ENCODE measurements at regions of chrX and their contacts with region 1.

Region 1: GRCh38 chrX:101415180-101416145 is 7.4 kb downstream of the HNRNPH2 start:
- DNase-seq: peak; percentile 68
- ATAC-seq: peak; percentile 76
- H3K4me3 ChIP-seq: 0 out of 2 replicates have a peak overlapping the region, but pooled peaks have one; percentile 2
- H3K27ac ChIP-seq: peak overlapping the region; percentile 10
- H3K4me1 ChIP-seq: peaks cover 22% of the 10 kb centered on the region
- H3K27me3 ChIP-seq: no peaks in the 10 kb centered on the region
- CTCF ChIP-seq: peak; percentile 69 to 82 (median 73)
- EP300 ChIP-seq: no peak
- POLR2A ChIP-seq: no peak
- RAD21 ChIP-seq: peak; percentile 84

Region 2: DNA sequence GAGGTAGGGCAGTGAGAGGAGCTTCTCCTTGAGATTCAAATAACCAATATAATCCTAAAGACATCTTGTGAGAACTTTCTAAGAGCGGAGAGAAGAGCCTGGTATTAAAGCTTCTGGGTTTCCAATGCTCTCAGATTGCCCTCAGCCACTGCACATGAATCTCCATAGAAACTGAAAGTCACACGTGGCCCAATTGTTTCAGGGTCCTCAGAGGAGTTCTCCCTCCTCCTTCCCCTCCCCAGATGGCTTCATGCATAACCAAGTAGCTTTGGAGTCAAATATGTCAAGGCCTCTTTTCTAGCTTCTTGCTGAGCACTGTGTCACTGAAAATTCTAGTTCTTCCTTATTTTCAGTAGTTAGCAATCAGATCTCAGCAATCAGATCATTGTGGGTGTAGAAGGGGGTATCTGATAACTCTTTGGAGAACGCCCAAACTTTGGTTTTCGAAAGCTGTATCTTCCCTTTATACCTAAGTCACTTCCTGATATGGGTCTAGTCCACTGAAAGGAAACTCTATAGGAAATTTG is 31.7 kb before region 1 on chrX:
- CTCF ChIA-PET with region 1: interaction called, 4 read pairs
- POLR2A ChIA-PET with region 1: interaction called, 4 read pairs
- RAD21 ChIA-PET with region 1: interaction called, 11 read pairs
- SMC1A ChIA-PET with region 1: interaction called, 3 read pairs
- in situ Hi-C with region 1: no loop called
- intact Hi-C with region 1: no loop called
- DNase-seq: peak; percentile 60
- ATAC-seq: peak; percentile 75
- H3K4me3 ChIP-seq: peak overlapping the region; percentile 71
- H3K27ac ChIP-seq: peak overlapping the region; percentile 70
- H3K4me1 ChIP-seq: no peaks in the 10 kb centered on the region
- H3K27me3 ChIP-seq: no peaks in the 10 kb centered on the region
- CTCF ChIP-seq: no peak
- EP300 ChIP-seq: no peak
- POLR2A ChIP-seq: no peak
- RAD21 ChIP-seq: no peak

Region 3: GRCh38 chrX:101462892-101463291 is 47.4 kb after region 1 on chrX:
- CTCF ChIA-PET with region 1: interaction called, 13 read pairs
- POLR2A ChIA-PET with region 1: no interaction called
- RAD21 ChIA-PET with region 1: no interaction called
- SMC1A ChIA-PET with region 1: interaction called, 5 read pairs
- in situ Hi-C with region 1: no loop called
- intact Hi-C with region 1: no loop called
- DNase-seq: no peak
- ATAC-seq: peak; percentile 71
- H3K4me3 ChIP-seq: no peak overlapping the region
- H3K27ac ChIP-seq: no peak overlapping the region
- H3K4me1 ChIP-seq: no peaks in the 10 kb centered on the region
- H3K27me3 ChIP-seq: no peaks in the 10 kb centered on the region
- CTCF ChIP-seq: peak; percentile 30 to 45 (median 38); a peak in 4 of 6 replicates
- EP300 ChIP-seq: no peak
- POLR2A ChIP-seq: no peak
- RAD21 ChIP-seq: peak; percentile 32

Region 4: DNA sequence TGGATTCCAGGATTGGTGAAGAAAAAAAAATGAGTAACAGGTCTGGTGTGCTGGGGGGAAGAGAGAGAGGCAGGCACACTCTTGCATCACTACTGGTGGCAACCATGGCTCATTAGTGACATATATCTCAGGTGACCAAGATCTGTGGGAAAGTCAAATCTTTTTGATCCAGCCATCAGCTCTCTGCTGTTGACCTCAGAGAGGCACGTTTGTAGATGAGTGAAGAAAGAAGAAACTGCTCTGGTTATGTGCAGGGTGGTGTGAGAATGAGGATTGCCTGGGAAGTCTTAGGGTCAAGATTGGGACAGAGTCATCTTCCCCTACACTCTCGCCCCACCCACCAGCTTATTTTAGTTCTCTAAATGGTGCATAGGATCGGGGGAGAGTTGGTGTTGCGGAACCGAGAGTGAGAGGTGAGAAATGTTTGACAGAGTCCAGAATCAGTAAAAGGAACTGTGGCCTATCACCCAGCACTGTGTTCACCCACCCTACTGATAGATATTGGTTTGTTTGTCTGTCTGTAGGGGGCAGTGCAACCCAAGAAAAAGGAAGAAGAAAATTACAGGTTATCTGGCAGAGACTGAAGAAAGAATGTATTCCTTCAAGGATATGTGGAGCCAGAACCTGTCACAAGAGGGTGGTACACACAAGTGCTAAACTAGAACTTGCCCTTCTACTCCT is 180.4 kb after region 1 on chrX:
- CTCF ChIA-PET with region 1: interaction called, 39 read pairs
- POLR2A ChIA-PET with region 1: interaction called, 6 read pairs
- RAD21 ChIA-PET with region 1: interaction called, 18 read pairs
- SMC1A ChIA-PET with region 1: interaction called, 4 read pairs
- in situ Hi-C with region 1: loop called (anchors 5 kb)
- intact Hi-C with region 1: loop called (anchors 5 kb)
- DNase-seq: peak; percentile 62
- ATAC-seq: peak; percentile 99
- H3K4me3 ChIP-seq: no peak overlapping the region
- H3K27ac ChIP-seq: no peak overlapping the region
- H3K4me1 ChIP-seq: no peaks in the 10 kb centered on the region; the same call in 1 of the 2 replicates
- H3K27me3 ChIP-seq: no peaks in the 10 kb centered on the region
- CTCF ChIP-seq: peak; percentile 48 to 77 (median 56); a peak in 5 of 6 replicates
- EP300 ChIP-seq: peak in 1 of 2 experiments; percentile 40; a peak in 1 of 4 replicates
- POLR2A ChIP-seq: no peak
- RAD21 ChIP-seq: peak; percentile 86

Region 5: DNA sequence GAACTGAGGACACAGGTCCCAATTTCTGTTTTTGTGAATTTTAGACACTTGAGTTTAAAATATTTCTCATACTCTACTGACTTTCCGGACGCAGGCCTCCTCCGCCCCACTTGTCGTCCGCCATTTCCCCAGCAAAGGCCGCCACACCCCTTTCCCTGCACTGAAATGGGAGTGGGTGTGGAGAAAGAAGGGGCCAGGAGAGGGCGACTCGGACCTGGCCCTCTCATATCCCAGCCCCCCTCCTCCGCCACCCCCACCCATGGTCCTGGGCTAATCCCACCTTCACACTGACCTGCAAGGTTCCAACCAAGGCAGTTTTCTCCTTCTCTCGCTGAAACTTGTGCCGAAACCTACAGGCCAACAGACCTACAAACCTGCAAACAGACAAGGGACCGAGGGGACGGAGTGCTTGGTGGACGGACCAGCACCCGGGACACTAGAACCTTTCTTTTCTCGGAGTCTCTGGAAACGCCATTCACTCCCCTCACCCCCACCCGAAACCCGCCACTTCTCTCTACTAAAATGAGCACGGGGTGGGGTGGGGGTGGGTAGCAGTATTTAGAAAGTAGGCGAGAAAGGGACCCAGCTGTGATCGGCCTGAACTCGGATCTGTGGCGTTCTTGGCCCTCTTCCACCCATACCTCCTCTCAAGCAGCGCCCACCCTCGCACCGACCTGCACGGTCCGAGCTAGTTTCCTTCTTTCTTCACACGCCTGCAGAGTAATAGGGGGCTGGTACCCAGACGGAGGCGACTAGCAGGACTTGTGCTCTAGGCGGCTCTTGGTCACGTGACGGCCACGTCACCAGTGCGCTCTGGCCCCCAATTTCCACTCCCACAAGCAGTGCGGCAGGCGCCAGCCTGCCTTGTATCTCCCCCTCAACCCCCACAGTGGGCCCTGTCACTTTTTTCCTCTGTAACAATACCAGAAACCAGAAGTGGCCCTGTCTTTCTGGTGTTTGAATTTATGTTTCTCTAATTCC is 202.0 kb after region 1 on chrX and contains the start of gene ARMCX6:
- CTCF ChIA-PET with region 1: interaction called, 3 read pairs
- POLR2A ChIA-PET with region 1: no interaction called
- RAD21 ChIA-PET with region 1: no interaction called
- SMC1A ChIA-PET with region 1: no interaction called
- in situ Hi-C with region 1: no loop called
- intact Hi-C with region 1: loop called (anchors 5 kb)
- DNase-seq: no peak
- ATAC-seq: peak; percentile 94
- H3K4me3 ChIP-seq: peak within 1 kb of the TSS; percentile 85
- H3K27ac ChIP-seq: peak within 1 kb of the TSS; percentile 77
- H3K4me1 ChIP-seq: peaks cover 5% of the 10 kb centered on the region
- H3K27me3 ChIP-seq: no peaks in the 10 kb centered on the region
- CTCF ChIP-seq: peak; percentile 28 to 51 (median 42); a peak in 4 of 6 replicates
- EP300 ChIP-seq: no peak
- POLR2A ChIP-seq: peak; percentile 68
- RAD21 ChIP-seq: peak; percentile 41; the same call in 1 of the 2 replicates
- polyA plus RNA-seq, gene ARMCX6: 60.3 to 72.3 TPM

Region 6: DNA sequence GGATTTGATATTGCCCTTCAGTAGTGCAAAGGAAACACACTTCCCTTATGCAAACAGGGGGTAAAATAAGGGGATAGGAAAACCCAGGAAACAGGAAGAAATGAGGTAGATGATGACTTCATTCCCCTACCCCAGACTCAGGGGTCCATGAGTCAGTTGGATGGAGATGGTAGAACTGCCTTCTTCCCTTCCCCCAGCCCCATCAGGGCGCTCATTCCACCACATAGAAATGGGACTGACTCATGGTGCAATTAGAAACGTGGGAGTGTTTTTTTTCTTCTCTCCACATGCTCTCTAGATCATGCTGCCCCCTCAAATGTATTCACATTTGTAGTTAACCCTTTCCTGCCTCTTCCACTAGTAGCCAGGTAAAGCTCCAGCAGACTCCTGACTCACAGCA is 267.3 kb after region 1 on chrX:
- CTCF ChIA-PET with region 1: no interaction called
- POLR2A ChIA-PET with region 1: no interaction called
- RAD21 ChIA-PET with region 1: no interaction called
- SMC1A ChIA-PET with region 1: no interaction called
- in situ Hi-C with region 1: no loop called
- intact Hi-C with region 1: no loop called
- DNase-seq: no peak
- ATAC-seq: no peak
- H3K4me3 ChIP-seq: no peak overlapping the region
- H3K27ac ChIP-seq: no peak overlapping the region
- H3K4me1 ChIP-seq: no peaks in the 10 kb centered on the region
- H3K27me3 ChIP-seq: no peaks in the 10 kb centered on the region
- CTCF ChIP-seq: no peak
- EP300 ChIP-seq: no peak
- POLR2A ChIP-seq: no peak
- RAD21 ChIP-seq: no peak

Region 7: GRCh38 chrX:101759000-101759399 is 343.5 kb after region 1 on chrX:
- CTCF ChIA-PET with region 1: interaction called, 5 read pairs
- POLR2A ChIA-PET with region 1: no interaction called
- RAD21 ChIA-PET with region 1: interaction called, 3 read pairs
- SMC1A ChIA-PET with region 1: interaction called, 5 read pairs
- in situ Hi-C with region 1: no loop called
- intact Hi-C with region 1: loop called (anchors 2 kb)
- DNase-seq: no peak
- ATAC-seq: peak; percentile 90
- H3K4me3 ChIP-seq: no peak overlapping the region
- H3K27ac ChIP-seq: no peak overlapping the region
- H3K4me1 ChIP-seq: no peaks in the 10 kb centered on the region
- H3K27me3 ChIP-seq: no peaks in the 10 kb centered on the region
- CTCF ChIP-seq: peak; percentile 30 to 49 (median 31); a peak in 5 of 6 replicates
- EP300 ChIP-seq: no peak
- POLR2A ChIP-seq: no peak
- RAD21 ChIP-seq: peak; percentile 41

Region 8: GRCh38 chrX:101799387-101799786 is 383.9 kb after region 1 on chrX:
- CTCF ChIA-PET with region 1: interaction called, 25 read pairs
- POLR2A ChIA-PET with region 1: interaction called, 3 read pairs
- RAD21 ChIA-PET with region 1: interaction called, 5 read pairs
- SMC1A ChIA-PET with region 1: interaction called, 5 read pairs
- in situ Hi-C with region 1: loop called (anchors 5 kb)
- intact Hi-C with region 1: loop called (anchors 1 kb)
- DNase-seq: peak; percentile 62
- ATAC-seq: peak; percentile 100
- H3K4me3 ChIP-seq: no peak overlapping the region
- H3K27ac ChIP-seq: no peak overlapping the region
- H3K4me1 ChIP-seq: no peaks in the 10 kb centered on the region
- H3K27me3 ChIP-seq: no peaks in the 10 kb centered on the region
- CTCF ChIP-seq: peak; percentile 53 to 63 (median 60); a peak in 5 of 6 replicates
- EP300 ChIP-seq: no peak
- POLR2A ChIP-seq: no peak
- RAD21 ChIP-seq: peak; percentile 58